ENCODE measurements at regions of chr17 and their contacts with region 1.

Region 1: GRCh38 chr17:58236394-58236793 is 2.0 kb upstream of the LPO start:
- DNase-seq: no peak
- H3K4me3 Mint-ChIP-seq: no peak overlapping the region
- H3K27ac Mint-ChIP-seq: no peak overlapping the region
- H3K4me1 Mint-ChIP-seq: peaks cover 2% of the 10 kb centered on the region
- H3K27me3 Mint-ChIP-seq: peaks cover 75% of the 10 kb centered on the region

Region 2: GRCh38 chr17:58249270-58250133 is 13.1 kb after region 1 on chr17:
- CTCF ChIA-PET with region 1: interaction called, 18 read pairs
- DNase-seq: peak; percentile 79
- H3K4me3 Mint-ChIP-seq: peak overlapping the region; percentile 64
- H3K27ac Mint-ChIP-seq: no peak overlapping the region
- H3K4me1 Mint-ChIP-seq: peaks cover 26% of the 10 kb centered on the region
- H3K27me3 Mint-ChIP-seq: peaks cover 84% of the 10 kb centered on the region

Measured in activated naive CD4-positive, alpha-beta T cell treated with anti-CD3 and anti-CD28 coated beads, Interleukin-2, amount 10 ng/mL, durations not matched to agents 7 days and 5 days (primary cell).